ENCODE measurements at regions of chrX and their contacts with region 1.

Region 1: GRCh38 chrX:2640275-2641150 is 50.6 kb upstream of the CD99 start:
- DNase-seq: no peak
- ATAC-seq: no peak
- H3K4me3 ChIP-seq: no peak overlapping the region
- H3K27ac ChIP-seq: no peak overlapping the region
- H3K4me1 ChIP-seq: no peaks in the 10 kb centered on the region
- H3K27me3 ChIP-seq: no peaks in the 10 kb centered on the region; a peak in 1 of 5 replicates
- CTCF ChIP-seq: no peak
- EP300 ChIP-seq: no peak
- POLR2A ChIP-seq: no peak
- RAD21 ChIP-seq: no peak

Region 2: GRCh38 chrX:2811271-2811670 is 170.8 kb after region 1 on chrX:
- CTCF ChIA-PET with region 1: no interaction called
- POLR2A ChIA-PET with region 1: no interaction called
- in situ Hi-C with region 1: no loop called
- intact Hi-C with region 1: loop called (anchors 1 kb)
- DNase-seq: no peak
- ATAC-seq: no peak
- H3K4me3 ChIP-seq: no peak overlapping the region
- H3K27ac ChIP-seq: no peak overlapping the region
- H3K4me1 ChIP-seq: no peaks in the 10 kb centered on the region
- H3K27me3 ChIP-seq: no peaks in the 10 kb centered on the region
- CTCF ChIP-seq: no peak
- EP300 ChIP-seq: no peak
- POLR2A ChIP-seq: no peak
- RAD21 ChIP-seq: no peak

Region 3: GRCh38 chrX:2819345-2820135 is 179.0 kb after region 1 on chrX:
- CTCF ChIA-PET with region 1: no interaction called
- POLR2A ChIA-PET with region 1: no interaction called
- in situ Hi-C with region 1: loop called (anchors 5 kb)
- intact Hi-C with region 1: no loop called
- DNase-seq: peak; percentile 9
- ATAC-seq: peak; percentile 63
- H3K4me3 ChIP-seq: no peak overlapping the region
- H3K27ac ChIP-seq: no peak overlapping the region
- H3K4me1 ChIP-seq: peaks cover 6% of the 10 kb centered on the region
- H3K27me3 ChIP-seq: no peaks in the 10 kb centered on the region
- CTCF ChIP-seq: peak; percentile 60
- EP300 ChIP-seq: no peak
- POLR2A ChIP-seq: no peak
- RAD21 ChIP-seq: no peak

Measured in HepG2 (cell line).